ENCODE measurements at regions of chr5 and their contacts with region 1.

Region 1: DNA sequence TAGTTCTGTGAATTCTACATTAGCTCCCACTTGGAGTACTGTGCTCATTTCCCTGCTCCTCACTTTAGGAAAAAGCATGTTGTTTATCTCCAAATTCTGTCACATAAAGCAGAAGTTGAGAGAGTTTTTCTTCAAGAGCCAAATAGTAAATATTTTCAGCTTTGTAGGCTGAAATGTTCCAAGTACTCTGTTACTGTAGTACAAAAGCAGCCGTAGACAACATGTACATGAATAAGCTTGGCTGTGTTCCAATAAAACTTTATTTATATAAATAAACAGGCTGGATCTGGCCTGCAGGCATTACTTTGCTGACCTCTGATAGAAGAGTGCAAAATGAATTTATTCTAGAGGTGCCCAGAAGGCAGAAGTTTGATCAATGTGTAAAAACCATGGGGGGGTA is 73.0 kb upstream of the AGXT2 start:
- DNase-seq: no peak
- H3K4me3 ChIP-seq: no peak overlapping the region
- H3K27ac ChIP-seq: no peak overlapping the region
- H3K4me1 ChIP-seq: no peaks in the 10 kb centered on the region
- H3K27me3 ChIP-seq: no peaks in the 10 kb centered on the region
- CTCF ChIP-seq: no peak
- POLR2A ChIP-seq: no peak

Region 2: DNA sequence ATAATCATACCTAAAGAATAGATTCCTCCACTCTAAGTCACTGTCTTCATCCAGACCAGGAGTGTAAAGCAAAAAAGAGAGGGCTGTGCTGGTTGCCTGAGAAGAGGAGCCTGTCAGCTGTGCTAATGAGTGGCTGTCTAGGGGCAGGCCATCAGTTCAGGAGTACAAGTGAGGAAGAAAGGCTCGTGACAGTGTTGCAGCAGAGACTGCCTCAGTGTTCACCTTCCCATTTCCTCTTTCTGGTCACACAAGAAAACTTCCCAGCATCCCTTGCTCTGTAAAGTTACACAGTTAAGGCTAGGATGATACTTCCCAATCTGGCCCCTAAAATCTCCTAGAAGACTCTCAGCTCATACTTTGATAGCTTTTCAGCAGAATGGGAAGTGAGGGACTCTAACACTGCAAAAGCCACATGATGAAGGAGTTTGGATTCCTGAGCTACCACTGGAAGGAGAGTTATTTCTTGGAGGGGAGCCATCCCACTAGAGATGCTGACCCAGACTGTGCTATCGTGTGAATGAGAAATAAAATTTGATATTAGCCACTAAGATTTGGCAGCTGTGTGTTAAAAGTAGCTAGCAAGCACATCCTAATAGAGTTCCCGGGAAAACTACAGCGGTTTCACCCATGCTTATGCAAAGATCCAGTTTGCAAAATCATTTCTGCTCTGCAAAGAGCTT is 1296.1 kb before region 1 on chr5:
- intact Hi-C with region 1: loop called (anchors 5 kb)
- DNase-seq: no peak
- H3K4me3 ChIP-seq: no peak overlapping the region
- H3K27ac ChIP-seq: peak overlapping the region in 1 of 2 donors; percentile 66
- H3K4me1 ChIP-seq: no peaks in the 10 kb centered on the region
- H3K27me3 ChIP-seq: no peaks in the 10 kb centered on the region
- CTCF ChIP-seq: no peak
- POLR2A ChIP-seq: no peak

Measured in breast epithelium (tissue), 4 donors.